H1 (cell line): ENCODE measurements at regions of chr6 and their contacts with region 1.

Region 1: DNA sequence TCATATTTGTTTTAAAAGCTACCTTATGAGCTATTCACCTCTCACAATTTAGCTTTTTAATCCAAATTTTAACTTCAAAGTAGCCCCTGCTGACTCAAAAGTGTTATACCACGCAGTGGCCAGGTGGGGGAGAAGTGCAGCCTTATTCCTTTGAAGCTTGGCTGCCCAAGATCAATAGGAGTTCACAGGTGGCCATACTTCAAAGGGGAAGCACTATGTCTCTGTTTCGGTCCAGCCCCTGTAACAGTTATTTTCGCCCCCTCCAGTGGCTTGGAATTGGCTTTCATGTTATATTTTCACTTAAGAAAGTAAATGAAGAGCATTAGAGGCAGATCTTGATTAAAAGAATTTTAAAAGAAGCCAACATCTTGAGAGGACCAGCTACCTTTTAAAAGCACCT is 608.4 kb downstream of the EPHA7 start:
- DNase-seq: peak; percentile 19 to 64
- H3K4me3 ChIP-seq: no peak overlapping the region
- H3K27ac ChIP-seq: no peak overlapping the region
- H3K4me1 ChIP-seq: no peaks in the 10 kb centered on the region
- H3K27me3 ChIP-seq: no peaks in the 10 kb centered on the region
- CTCF ChIP-seq: peak; percentile 47 to 75 (median 59)
- EP300 ChIP-seq: no peak
- POLR2A ChIP-seq: no peak
- RAD21 ChIP-seq: peak; percentile 70 to 78

Region 2: DNA sequence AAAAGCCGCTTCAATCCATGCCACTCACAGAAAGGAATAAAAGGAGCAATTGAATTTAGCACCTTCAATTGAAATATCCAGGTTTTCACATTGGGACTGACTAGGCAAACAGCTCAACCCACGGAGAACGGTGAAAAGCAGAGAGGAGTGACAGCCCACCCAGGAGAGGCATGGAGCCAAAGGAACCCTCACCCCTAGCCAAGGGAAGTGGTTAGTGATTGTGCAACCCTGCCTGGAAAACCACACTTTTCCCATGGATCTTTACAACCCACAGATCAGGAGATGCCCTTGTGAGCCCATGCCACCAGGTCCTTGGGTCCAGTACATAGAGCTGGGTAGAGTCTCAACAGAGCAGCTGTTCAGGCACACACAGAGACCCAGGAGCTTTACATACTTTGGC is 303.4 kb before region 1 on chr6:
- CTCF ChIA-PET with region 1: no interaction called
- POLR2A ChIA-PET with region 1: no interaction called
- DNase-seq: no peak
- H3K4me3 ChIP-seq: no peak overlapping the region
- H3K27ac ChIP-seq: no peak overlapping the region
- H3K4me1 ChIP-seq: no peaks in the 10 kb centered on the region
- H3K27me3 ChIP-seq: no peaks in the 10 kb centered on the region
- CTCF ChIP-seq: no peak
- EP300 ChIP-seq: no peak
- POLR2A ChIP-seq: no peak
- RAD21 ChIP-seq: no peak

Region 3: DNA sequence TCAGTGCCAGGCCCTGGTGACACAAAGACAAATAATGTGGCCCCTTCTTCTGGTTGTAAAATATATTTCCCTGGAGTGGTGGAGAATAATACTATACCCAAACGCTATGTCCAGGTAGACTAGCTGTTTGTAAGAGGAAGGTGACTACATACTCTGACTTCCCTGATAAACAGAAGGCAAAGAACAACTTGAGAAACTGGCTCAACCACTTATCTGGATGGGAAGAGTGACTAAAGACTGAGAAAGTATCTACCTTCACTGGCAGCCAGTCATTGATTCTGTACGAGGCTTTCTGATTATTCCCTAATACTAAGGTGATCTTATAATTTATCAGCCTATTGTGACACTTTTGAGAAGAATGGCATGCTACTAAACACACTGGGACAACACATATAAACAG is 38.7 kb after region 1 on chr6:
- CTCF ChIA-PET with region 1: interaction called, 14 read pairs
- POLR2A ChIA-PET with region 1: no interaction called
- DNase-seq: no peak
- H3K4me3 ChIP-seq: no peak overlapping the region
- H3K27ac ChIP-seq: no peak overlapping the region
- H3K4me1 ChIP-seq: peaks cover 0 to 8% (median 6%) of the 10 kb centered on the region in 4 experiments; a peak in 4 of 7 replicates
- H3K27me3 ChIP-seq: peaks cover 27 to 49% (median 43%) of the 10 kb centered on the region in 4 experiments
- CTCF ChIP-seq: no peak
- EP300 ChIP-seq: no peak
- POLR2A ChIP-seq: no peak
- RAD21 ChIP-seq: no peak

Region 4: DNA sequence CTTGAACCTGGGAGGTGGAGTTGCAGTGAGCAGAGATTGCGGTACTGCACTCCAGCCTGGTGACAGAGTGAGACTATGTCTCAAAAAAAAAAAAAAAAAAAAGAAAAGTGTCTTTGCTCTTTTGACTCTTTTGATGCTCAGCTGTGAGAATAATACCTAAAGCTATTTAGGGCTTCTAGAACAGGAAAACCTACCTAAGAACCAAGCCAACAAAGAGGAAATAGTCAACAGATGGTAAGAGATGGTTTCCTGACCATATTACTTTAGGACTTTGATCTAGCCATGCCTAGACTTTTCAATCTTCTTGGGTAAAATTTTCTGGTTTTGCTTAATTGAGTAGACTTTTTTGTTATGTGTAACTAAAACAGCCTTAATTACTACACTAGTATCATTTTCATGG is 100.4 kb after region 1 on chr6:
- CTCF ChIA-PET with region 1: no interaction called
- POLR2A ChIA-PET with region 1: no interaction called
- DNase-seq: no peak
- H3K4me3 ChIP-seq: no peak overlapping the region
- H3K27ac ChIP-seq: no peak overlapping the region
- H3K4me1 ChIP-seq: peaks cover 0 to 6% (median 0%) of the 10 kb centered on the region in 4 experiments; a peak in 1 of 7 replicates
- H3K27me3 ChIP-seq: no peaks in the 10 kb centered on the region
- CTCF ChIP-seq: no peak
- EP300 ChIP-seq: no peak
- POLR2A ChIP-seq: no peak
- RAD21 ChIP-seq: no peak

Region 5: GRCh38 chr6:93017213-93017612 is 206.3 kb after region 1 on chr6:
- CTCF ChIA-PET with region 1: interaction called, 22 read pairs
- POLR2A ChIA-PET with region 1: no interaction called
- DNase-seq: no peak
- H3K4me3 ChIP-seq: no peak overlapping the region
- H3K27ac ChIP-seq: no peak overlapping the region
- H3K4me1 ChIP-seq: no peaks in the 10 kb centered on the region
- H3K27me3 ChIP-seq: no peaks in the 10 kb centered on the region
- CTCF ChIP-seq: peak; percentile 22 to 69 (median 69)
- EP300 ChIP-seq: no peak
- POLR2A ChIP-seq: no peak
- RAD21 ChIP-seq: peak; percentile 78 to 85